ENCODE measurements at regions of chr10 and their contacts with region 1.

Region 1: GRCh38 chr10:14185316-14186045 is 145.2 kb downstream of the FRMD4A start:
- DNase-seq: peak; percentile 95

Region 2: DNA sequence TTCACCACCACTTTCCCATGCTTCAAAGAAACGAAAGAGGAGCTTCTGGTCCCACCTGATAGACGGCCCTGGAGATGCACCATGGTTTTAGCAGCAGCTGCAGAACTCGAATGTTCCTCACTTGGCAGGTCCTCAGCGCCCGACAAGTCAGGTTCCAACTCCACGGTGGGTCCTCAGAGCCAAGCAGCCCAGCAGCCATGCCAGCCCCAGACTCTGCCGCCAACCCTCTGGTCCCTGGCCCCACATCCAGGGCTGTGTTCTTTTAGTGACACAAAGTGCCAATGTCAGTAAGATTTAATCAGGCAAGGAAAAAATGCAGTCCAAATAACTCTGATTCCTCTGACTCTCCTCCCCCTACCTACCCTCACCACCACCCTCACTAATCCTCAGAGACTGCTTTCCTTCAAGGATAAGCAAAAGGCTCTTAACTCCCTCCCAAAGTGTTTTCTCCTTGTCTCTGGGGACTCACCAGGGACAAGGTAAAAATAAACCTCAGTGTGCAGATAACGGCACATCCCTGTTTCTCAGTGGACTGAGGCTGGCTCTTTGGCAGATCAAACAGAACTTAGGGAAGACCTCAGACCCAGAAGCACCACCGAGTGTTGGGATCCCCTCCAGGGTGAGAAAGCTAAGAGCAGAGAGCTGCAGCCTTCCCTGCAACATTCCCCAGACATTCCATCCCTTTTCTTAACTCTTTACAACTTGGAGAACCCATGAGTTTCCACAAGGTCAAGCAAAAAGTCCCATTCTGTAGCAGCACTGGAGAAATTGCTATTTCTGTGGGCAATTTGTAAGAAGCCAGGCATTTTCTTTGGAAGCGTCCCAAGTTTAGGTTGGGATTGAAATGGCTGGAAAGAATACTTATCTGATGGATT is 213.6 kb before region 1 on chr10:
- in situ Hi-C with region 1: no loop called
- DNase-seq: no peak

Region 3: DNA sequence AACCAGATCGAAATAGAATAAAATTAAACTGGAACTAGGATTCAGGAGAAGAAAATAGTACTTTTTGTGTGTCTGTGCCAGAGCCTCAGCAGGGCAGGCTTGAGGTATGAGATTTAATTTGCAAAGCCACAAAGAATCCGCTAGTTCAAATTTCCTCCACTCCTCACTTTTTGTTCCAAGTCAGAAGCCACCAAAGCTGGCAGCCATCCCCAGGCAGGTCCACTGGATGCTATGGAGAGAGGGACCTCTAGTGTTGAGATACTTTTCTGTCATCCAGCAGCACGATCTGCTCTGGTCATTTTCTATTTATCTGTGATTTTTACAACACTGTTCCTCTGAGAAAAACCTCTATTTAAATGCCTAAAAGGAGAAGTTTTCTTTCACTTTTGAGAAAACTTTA is 293.1 kb after region 1 on chr10:
- in situ Hi-C with region 1: loop called (anchors 25 kb)
- DNase-seq: peak; percentile 88

Measured in ACHN (cell line).